Heart left ventricle (tissue), 16 donors: ENCODE measurements at regions of chr11 and their contacts with region 1.

Region 1: DNA sequence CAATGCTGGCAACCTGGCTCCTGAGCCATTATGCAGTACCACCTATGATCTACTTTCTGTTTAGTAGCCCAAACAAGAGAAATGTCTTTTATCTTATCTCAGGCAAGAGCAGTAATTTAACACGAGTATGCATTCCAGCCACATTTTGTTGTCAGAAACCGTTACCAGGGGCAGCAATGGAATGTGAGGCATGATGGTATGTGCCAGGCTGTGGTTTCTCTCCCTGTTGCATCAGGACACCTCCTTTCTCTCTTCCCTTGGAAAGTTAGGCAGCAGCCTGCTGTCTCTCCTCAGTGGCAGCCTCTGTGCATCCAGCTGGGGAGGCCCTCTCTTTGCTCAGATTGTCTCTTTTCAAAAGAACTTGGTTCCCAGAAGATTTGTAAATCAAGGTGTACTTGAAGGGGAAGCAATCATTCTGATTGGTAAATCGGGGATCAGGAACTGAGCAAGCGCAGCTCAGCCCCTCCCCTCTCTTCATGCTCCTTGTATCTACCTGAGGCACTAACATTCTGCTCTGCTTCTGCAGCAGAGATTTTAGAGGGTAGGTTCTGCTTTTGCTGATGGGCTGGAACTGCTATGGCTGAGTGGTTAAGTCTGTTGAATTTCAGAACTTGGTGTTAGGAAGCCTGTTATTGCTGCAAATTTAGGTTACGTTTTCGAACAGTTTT is 229.2 kb downstream of the ADAMTS15 start:
- DNase-seq: peak in 4 of 5 donors; percentile 24 to 43 (median 41)
- ATAC-seq: peak; percentile 39 to 83 (median 58)
- H3K4me3 ChIP-seq: peak overlapping the region in 1 of 12 donors; percentile 10
- H3K27ac ChIP-seq: peak overlapping the region; percentile 74 to 87 (median 79)
- H3K4me1 ChIP-seq: peaks cover 0 to 46% (median 31%) of the 10 kb centered on the region in 12 donors
- H3K27me3 ChIP-seq: no peaks in the 10 kb centered on the region
- CTCF ChIP-seq: no peak
- POLR2A ChIP-seq: no peak

Region 2: DNA sequence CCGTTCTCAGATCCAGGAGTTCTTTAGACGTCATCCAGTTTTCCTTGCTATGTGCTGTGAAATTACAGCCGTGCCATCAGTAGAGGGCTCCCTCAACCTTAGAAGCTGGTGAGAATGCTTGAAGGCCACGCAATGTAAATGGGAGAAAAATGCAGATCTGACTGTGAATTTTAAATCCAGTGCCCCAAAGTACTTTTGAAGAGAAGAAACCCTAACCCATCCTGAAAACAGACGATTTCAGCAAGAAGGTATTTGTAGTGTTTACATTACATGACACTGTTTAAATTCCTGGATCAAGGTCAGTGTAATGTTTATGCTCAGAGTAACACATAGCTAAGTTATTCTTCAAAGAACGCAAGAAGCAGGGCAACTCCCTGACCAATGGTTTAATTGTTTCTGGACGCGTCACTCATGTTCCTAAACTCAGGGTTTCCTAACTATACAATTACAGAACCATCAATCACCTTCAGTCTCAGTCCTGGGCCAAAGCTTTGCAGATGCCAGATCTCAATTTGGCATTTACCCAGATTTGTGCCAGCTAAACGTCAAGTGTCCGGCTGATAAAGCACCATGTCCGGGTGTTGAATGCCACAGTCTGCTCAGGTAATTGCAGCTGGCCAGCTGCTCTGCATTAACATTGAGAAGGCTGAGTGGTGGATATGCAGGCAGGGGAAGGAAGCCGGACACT is 287.4 kb before region 1 on chr11:
- intact Hi-C with region 1: no loop called
- DNase-seq: no peak
- ATAC-seq: peak in 3 of 4 donors; percentile 43 to 77 (median 68)
- H3K4me3 ChIP-seq: no peak overlapping the region
- H3K27ac ChIP-seq: peak overlapping the region in 1 of 12 donors; percentile 60
- H3K4me1 ChIP-seq: peaks cover 0 to 14% (median 9%) of the 10 kb centered on the region in 12 donors
- H3K27me3 ChIP-seq: no peaks in the 10 kb centered on the region
- CTCF ChIP-seq: peak in 8 of 12 donors; percentile 29 to 59 (median 44)
- POLR2A ChIP-seq: no peak

Region 3: DNA sequence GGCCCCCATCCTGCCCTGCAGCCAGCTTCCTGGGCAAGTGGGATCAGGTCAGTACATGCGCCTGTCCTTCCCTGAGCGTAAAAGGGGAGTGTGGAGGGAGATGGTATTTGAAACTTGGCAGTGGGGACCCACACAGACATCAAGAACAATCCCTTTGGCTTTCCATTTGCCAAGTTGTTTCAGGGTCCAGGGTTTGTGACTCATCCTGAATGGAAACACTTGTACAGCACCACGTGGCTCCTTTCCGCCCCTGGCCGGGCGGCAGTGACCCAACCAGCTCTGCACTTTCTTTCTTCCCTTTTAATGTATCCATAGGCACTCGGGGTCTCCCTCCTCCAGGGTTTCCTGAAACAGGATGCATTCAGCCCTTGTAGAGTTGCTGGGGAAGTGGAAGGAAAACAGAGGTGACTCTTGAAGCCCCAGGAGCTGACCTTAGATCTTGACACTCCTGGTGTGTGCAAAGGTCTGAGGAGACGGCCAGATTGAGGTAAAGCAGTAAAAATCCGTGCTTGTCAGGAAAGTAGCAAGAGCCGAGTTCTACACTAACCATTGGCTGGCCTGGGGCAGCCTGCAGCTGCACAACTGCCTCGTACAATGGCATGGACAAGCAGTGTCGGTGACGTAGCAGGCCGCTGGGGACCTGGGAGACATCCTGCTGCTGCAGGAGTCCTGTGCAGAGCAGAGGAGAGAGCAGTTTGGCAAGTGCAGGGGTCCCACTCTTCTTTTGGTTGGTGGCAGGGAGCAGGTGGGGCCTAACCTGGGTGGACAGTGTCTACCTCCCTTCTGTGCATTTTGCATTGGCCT is 48.8 kb after region 1 on chr11:
- intact Hi-C with region 1: loop called in 1 of 10 experiments (anchors 5 kb)
- DNase-seq: peak; percentile 51 to 72 (median 64)
- ATAC-seq: peak; percentile 76 to 94 (median 90)
- H3K4me3 ChIP-seq: no peak overlapping the region
- H3K27ac ChIP-seq: peak overlapping the region in 9 of 12 donors; percentile 47 to 75 (median 60)
- H3K4me1 ChIP-seq: peaks cover 5 to 35% (median 28%) of the 10 kb centered on the region in 12 donors
- H3K27me3 ChIP-seq: no peaks in the 10 kb centered on the region
- CTCF ChIP-seq: no peak
- POLR2A ChIP-seq: no peak

Region 4: DNA sequence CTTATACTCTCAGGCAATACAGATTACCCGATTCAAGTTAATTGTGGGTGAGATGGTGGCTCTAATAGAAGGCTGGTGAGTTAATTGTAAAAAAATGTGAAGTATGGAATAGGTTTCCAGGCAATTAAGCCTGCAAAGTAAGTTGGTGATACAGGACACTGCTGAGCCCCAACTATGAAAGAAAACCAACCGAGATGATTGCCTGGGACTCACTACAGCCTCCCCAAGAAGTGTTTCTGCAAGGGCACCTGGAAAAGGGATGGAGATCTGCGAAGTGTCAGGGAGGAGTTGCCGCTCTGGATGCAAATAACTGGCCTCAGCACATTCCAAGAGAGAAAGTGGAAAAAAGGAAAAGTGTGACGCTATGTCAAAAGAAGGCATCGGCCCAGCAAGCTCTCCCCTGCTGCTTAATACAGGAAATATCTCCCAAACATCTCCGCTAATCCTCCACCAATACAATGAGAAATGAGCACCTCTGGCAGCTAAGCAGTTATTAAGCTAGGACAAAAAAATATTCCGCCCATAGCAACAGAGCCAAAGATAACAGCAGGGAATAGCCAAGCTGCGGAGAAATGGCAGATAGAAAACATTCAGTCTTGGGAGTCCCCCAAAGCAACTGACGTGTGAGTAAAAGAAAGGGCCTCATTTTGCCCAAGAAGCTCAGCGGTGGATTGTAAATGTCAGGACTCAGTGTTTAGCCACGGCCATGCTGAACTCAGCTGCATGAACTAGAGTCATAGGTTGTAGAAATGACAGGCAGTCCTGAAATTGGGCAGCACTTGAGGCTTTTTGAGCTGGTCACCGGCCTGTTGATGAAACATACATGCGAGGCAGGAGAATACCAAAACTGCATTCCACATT is 105.0 kb after region 1 on chr11:
- intact Hi-C with region 1: loop called in 2 of 10 experiments (anchors 5 to 10 kb)
- DNase-seq: no peak
- ATAC-seq: peak; percentile 37 to 73 (median 60)
- H3K4me3 ChIP-seq: peak overlapping the region in 1 of 12 donors; percentile 6
- H3K27ac ChIP-seq: peak overlapping the region; percentile 4 to 63 (median 50)
- H3K4me1 ChIP-seq: peaks cover 0 to 35% (median 25%) of the 10 kb centered on the region in 12 donors
- H3K27me3 ChIP-seq: no peaks in the 10 kb centered on the region
- CTCF ChIP-seq: no peak
- POLR2A ChIP-seq: no peak

Region 5: GRCh38 chr11:130827451-130828377 is 150.1 kb after region 1 on chr11:
- intact Hi-C with region 1: loop called in 4 of 10 experiments (anchors 5 to 10 kb)
- DNase-seq: peak in 4 of 5 donors; percentile 63 to 86 (median 79)
- ATAC-seq: peak; percentile 83 to 94 (median 91)
- H3K4me3 ChIP-seq: no peak overlapping the region
- H3K27ac ChIP-seq: peak overlapping the region in 10 of 12 donors; percentile 24 to 73 (median 58)
- H3K4me1 ChIP-seq: peaks cover 0 to 42% (median 25%) of the 10 kb centered on the region in 12 donors
- H3K27me3 ChIP-seq: no peaks in the 10 kb centered on the region
- CTCF ChIP-seq: peak; percentile 13 to 62 (median 48)
- POLR2A ChIP-seq: no peak